Pancreas (tissue), 10 donors: ENCODE measurements at regions of chr16 and their contacts with region 1.

Region 1: DNA sequence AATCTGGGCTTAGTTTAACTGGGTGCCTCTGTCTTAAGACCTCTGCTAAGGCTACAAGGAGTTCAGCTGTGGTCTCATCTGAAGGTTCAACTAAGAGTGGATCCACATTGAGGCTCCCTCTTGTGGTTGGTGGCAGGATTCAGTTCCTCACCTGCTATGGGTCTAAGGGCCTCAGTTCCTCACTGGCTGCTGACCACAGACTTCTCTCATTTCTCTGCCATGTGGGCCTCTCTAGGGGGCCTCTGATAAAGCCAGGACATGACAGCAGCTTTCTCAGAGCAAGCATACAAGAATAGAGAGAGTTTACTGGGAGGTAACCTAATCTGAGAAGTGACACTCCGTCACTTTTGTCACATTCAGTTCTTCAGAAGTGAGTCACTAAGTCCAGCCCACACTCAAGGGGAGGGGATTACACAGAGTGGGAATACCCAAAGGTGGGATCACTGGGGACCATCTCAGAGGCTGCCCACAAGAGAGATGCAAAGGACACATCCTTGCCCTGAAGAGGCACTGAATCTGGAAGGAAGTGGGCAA is 19.2 kb upstream of the ABAT start:
- DNase-seq: peak in 2 of 6 donors; percentile 32 to 42
- ATAC-seq: peak in 3 of 4 donors; percentile 35 to 91 (median 69)
- H3K4me3 ChIP-seq: no peak overlapping the region
- H3K27ac ChIP-seq: no peak overlapping the region
- H3K4me1 ChIP-seq: no peaks in the 10 kb centered on the region
- H3K27me3 ChIP-seq: no peaks in the 10 kb centered on the region
- CTCF ChIP-seq: peak in 1 of 4 donors; percentile 19

Region 2: DNA sequence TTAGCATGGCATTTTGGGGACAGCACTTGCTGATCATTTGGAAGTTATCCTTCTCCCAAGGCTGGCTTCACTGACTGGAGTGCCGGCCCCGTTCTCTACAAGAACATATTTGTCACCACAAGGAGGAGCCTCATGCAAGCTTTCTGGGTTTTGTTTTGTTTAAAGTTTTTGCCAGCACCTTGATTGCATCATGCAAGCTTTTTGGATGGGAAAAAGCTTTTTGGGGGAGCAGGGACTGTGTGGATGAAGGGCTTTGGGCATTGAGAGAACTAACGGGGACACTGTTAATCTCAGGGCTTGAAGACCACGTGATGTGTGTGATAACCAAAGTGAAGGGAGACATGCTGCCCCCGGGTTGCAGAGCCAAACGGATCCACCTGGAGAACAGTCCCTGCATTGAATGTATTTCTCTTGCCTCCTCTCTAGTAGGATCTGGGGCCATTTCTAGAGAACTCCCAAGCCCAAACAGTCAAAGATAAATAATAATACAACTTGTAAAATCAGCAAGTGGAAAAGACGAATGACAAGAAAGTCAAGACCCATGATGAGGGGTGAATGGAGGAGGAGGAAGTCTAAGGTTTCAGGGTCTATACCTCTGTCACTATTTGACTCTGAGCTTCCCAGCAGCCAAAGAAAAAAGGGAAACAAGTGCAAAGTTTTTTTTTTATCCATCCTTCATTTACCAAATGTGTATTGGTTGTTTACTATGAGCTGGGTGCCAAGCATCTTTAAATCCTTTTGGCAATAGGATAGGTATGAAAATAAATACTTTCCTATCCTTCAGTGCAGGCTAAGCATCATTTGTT is 82.1 kb before region 1 on chr16:
- intact Hi-C with region 1: loop called in 2 of 3 experiments (anchors 10 kb)
- DNase-seq: no peak
- ATAC-seq: peak in 3 of 4 donors; percentile 47 to 56 (median 52)
- H3K4me3 ChIP-seq: no peak overlapping the region
- H3K27ac ChIP-seq: no peak overlapping the region
- H3K4me1 ChIP-seq: no peaks in the 10 kb centered on the region
- H3K27me3 ChIP-seq: no peaks in the 10 kb centered on the region
- CTCF ChIP-seq: no peak

Region 3: GRCh38 chr16:8878521-8878911 is 223.3 kb after region 1 on chr16:
- intact Hi-C with region 1: loop called in 2 of 3 experiments (anchors 5 kb)
- DNase-seq: peak in 1 of 6 donors; percentile 26
- ATAC-seq: peak in 3 of 4 donors; percentile 7 to 54 (median 43)
- H3K4me3 ChIP-seq: no peak overlapping the region
- H3K27ac ChIP-seq: peak overlapping the region in 2 of 4 donors; percentile 35 to 46
- H3K4me1 ChIP-seq: peaks cover 0 to 5% (median 0%) of the 10 kb centered on the region in 3 donors
- H3K27me3 ChIP-seq: no peaks in the 10 kb centered on the region
- CTCF ChIP-seq: no peak